Gastrocnemius medialis (tissue), 4 donors: ENCODE measurements at regions of chr3 and their contacts with region 1.

Region 1: DNA sequence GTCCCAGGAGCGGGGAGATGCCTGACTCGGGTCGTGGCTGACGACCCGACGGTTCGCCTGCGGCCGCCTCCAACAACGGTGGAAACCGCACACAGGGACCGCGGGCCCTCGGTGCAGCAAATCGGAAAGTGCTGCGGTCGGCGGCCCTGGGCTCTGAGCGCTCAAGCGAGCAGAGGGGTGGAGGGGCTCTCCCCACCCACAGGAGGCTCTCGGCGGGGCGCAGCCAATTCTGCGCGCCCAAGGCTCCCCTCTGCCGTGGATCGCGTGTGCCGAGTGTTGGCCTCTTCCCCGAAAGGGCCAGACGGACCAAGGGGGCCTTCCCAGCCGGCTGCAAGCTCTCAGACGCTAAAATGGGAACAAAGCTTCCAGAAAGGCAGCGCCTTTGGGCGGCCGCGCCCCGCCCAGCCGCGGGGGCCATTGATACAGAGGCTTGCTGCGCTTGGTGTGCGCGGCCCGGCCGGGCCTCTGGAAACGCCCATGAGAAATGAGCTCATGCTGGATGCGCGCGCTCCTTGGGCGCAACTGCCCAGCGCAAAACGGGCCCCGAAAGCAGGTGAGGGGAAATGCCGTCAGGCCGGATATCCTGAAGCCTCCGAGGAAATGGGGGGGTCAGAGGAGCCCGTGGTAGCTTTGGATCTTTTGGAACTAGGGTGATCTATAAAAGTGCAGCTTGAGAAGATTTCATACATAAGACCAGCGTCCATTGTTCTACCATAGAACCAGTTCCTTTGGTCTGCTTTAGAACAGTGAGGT is 1.2 kb upstream of the GSK3B start:
- DNase-seq: peak; percentile 74 to 87
- ATAC-seq: peak; percentile 34 to 37
- H3K4me3 ChIP-seq: peak overlapping the region; percentile 65 to 94 (median 90)
- H3K27ac ChIP-seq: peak overlapping the region; percentile 90 to 99 (median 98)
- H3K4me1 ChIP-seq: peaks cover 20 to 31% of the 10 kb centered on the region in 2 donors
- H3K27me3 ChIP-seq: no peaks in the 10 kb centered on the region
- CTCF ChIP-seq: peak in 1 of 5 experiments; percentile 3
- POLR2A ChIP-seq: peak; percentile 81 to 92

Region 2: DNA sequence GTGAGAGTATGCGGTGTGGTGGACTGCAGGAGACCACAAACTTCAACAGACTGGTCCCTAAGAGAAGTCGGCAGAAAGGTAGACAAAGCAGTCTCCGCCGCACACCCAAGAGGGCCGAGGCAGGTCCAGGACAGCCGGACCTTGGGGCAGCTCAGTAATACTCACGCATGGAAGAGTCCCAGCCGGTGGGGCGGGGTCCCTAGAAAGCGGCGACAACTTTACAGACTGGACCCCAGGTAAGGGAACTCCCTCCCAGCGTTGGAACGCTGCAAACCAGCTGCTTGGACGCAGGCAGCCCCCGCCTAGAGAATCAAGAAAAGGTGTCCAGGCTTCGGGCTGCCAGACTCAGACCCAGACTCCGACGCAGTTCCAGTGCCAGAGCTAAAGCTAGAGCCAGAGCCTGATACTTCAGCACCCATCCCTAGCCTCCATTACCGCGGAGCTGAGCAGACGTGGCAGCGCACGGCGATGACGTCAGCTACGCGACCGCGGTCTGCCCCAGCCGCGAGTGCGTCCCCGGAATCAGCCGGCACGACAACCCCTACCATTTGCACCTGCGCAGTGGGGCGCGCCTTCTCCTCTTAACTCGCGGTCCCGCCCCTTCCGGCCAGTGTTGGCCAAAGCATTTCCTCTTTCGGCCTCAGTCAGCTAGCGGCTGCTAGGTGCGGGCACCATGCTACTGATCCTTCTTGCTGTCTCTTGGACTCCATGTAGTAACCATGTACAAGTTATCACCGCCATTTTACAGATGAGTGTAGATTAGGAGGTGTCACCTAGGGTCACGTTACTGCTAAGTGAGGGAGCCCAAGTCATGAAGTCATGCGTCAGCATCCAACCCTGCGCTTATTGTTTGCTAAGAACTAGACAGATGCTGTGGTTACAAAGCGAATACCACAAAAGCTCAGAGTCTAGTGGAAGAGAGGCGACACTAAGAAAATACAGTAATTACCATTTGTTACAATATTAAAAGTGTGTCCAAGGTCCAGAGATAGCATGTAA is 631.9 kb before region 1 on chr3 and contains the start of gene TMEM39A:
- in situ Hi-C with region 1: loop called in 1 of 4 experiments (anchors 25 kb)
- intact Hi-C with region 1: loop called (anchors 10 kb)
- DNase-seq: peak; percentile 98 to 99
- ATAC-seq: peak; percentile 97 to 98
- H3K4me3 ChIP-seq: peak within 1 kb of the TSS; percentile 88 to 99 (median 94)
- H3K27ac ChIP-seq: peak within 1 kb of the TSS; percentile 80 to 92 (median 83)
- H3K4me1 ChIP-seq: peaks cover 21 to 27% of the 10 kb centered on the region in 2 donors
- H3K27me3 ChIP-seq: no peaks in the 10 kb centered on the region
- CTCF ChIP-seq: peak in 3 of 5 experiments; percentile 23 to 33 (median 32)
- POLR2A ChIP-seq: peak; percentile 80 to 85
- total RNA-seq, gene TMEM39A: 9.0 to 21.2 (median 15.5) TPM

Region 3: GRCh38 chr3:119702530-119703157 is 392.8 kb before region 1 on chr3 and contains the start of gene CFAP91:
- in situ Hi-C with region 1: loop called in 1 of 4 experiments (anchors 25 kb)
- intact Hi-C with region 1: loop called (anchors 10 kb)
- DNase-seq: peak; percentile 88 to 93
- ATAC-seq: peak; percentile 97 to 98
- H3K4me3 ChIP-seq: peak within 1 kb of the TSS; percentile 54 to 74 (median 60)
- H3K27ac ChIP-seq: peak within 1 kb of the TSS in 2 of 4 donors; percentile 16 to 48
- H3K4me1 ChIP-seq: peaks cover 0 to 8% of the 10 kb centered on the region in 2 donors
- H3K27me3 ChIP-seq: no peaks in the 10 kb centered on the region
- CTCF ChIP-seq: no peak
- POLR2A ChIP-seq: no peak
- total RNA-seq, gene CFAP91: 0.11 to 0.36 (median 0.20) TPM in 3 of 4 donors, not detected in the other

Region 4: GRCh38 chr3:119955972-119956371 is 139.4 kb before region 1 on chr3:
- in situ Hi-C with region 1: no loop called
- intact Hi-C with region 1: no loop called
- DNase-seq: no peak
- ATAC-seq: no peak
- H3K4me3 ChIP-seq: no peak overlapping the region
- H3K27ac ChIP-seq: no peak overlapping the region
- H3K4me1 ChIP-seq: peaks cover 19 to 23% of the 10 kb centered on the region in 2 donors
- H3K27me3 ChIP-seq: no peaks in the 10 kb centered on the region
- CTCF ChIP-seq: no peak
- POLR2A ChIP-seq: no peak

Region 5: GRCh38 chr3:120198305-120198878 is 103.0 kb after region 1 on chr3:
- in situ Hi-C with region 1: loop called in 1 of 4 experiments (anchors 10 kb)
- intact Hi-C with region 1: loop called (anchors 2 kb)
- DNase-seq: no peak
- ATAC-seq: peak in 1 of 2 donors; percentile 33
- H3K4me3 ChIP-seq: no peak overlapping the region
- H3K27ac ChIP-seq: no peak overlapping the region
- H3K4me1 ChIP-seq: peaks cover 13 to 33% of the 10 kb centered on the region in 2 donors
- H3K27me3 ChIP-seq: no peaks in the 10 kb centered on the region
- CTCF ChIP-seq: peak in 1 of 5 experiments; percentile 16
- POLR2A ChIP-seq: no peak

Region 6: DNA sequence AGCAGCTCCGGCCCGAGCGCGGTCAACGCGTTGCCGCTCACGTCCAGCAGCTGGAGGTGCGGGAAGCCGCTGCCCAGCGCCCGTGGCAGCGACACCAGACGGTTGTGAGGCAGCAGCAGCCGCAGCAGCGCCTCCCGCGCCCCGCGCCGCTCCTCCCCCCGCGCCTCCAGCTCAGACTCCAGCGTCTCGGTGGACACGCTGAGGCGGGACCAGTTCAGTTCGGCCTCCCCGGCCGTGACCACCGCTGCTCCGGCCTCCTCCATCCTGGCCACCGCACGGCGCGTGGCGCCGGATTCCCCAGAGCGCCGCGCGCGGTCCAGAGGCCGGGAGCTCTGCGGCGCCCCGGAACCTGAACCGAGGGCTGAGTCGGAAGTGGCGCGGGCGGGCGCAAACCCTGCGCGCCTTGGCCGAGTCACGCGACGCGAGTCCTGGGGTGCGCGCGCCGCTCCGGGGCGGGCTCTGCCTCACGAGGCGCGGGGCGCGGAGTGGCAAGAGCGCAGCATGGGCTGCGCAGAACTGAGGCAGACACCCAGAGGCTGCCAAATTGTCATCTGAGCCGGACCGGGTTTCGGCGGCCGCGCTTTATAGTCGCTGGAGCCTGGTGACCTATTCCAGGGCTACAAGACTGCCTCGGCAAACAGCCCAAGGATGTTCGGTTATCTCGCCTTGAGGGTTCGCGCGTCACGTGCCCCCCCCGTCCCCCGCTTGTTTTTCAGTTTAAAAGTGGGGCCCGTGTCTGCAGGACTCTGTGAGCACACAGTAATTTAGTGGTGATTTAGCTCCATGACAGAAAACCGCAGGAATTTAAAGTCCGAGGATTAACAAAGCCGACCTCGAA is 253.8 kb after region 1 on chr3 and contains the start of gene LRRC58:
- in situ Hi-C with region 1: no loop called
- intact Hi-C with region 1: loop called (anchors 1 kb)
- DNase-seq: peak; percentile 82 to 93
- ATAC-seq: peak; percentile 88 to 93
- H3K4me3 ChIP-seq: peak within 1 kb of the TSS; percentile 77 to 95 (median 85)
- H3K27ac ChIP-seq: peak within 1 kb of the TSS; percentile 88 to 93 (median 90)
- H3K4me1 ChIP-seq: peaks cover 20 to 43% of the 10 kb centered on the region in 2 donors
- H3K27me3 ChIP-seq: no peaks in the 10 kb centered on the region
- CTCF ChIP-seq: peak in 4 of 5 experiments; percentile 14 to 48 (median 28)
- POLR2A ChIP-seq: peak; percentile 92 to 95
- total RNA-seq, gene LRRC58: 8.4 to 15.2 (median 13.6) TPM